HCT116 (cell line): ENCODE measurements at regions of chr3 and their contacts with region 1.

Region 1: GRCh38 chr3:192881159-192881786 is 36.4 kb downstream of the MB21D2 start:
- DNase-seq: no peak
- ATAC-seq: no peak
- H3K4me3 ChIP-seq: no peak overlapping the region
- H3K27ac ChIP-seq: no peak overlapping the region
- H3K4me1 ChIP-seq: peaks cover 36 to 52% of the 10 kb centered on the region in 2 experiments
- H3K27me3 ChIP-seq: no peaks in the 10 kb centered on the region
- CTCF ChIP-seq: no peak
- POLR2A ChIP-seq: no peak
- RAD21 ChIP-seq: no peak

Region 2: DNA sequence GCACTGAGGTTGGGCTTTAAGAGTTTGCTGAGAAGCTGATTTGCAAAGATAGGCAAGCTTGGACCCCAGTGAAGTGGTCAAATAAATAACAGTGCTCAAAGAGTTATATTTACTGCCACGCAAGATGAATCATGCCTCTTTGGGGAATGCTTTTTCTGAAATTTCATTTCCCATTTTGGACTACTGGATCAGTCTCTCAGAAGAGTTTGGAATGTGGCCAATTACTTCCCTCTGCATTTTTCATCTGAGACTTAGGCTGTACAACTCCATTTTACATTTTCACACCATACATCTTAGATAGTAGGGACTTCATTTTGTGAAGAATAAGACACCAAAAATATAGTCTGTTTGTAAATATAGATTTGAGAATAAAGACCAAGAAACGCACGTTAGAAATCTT is 573.6 kb before region 1 on chr3:
- CTCF ChIA-PET with region 1: no interaction called
- POLR2A ChIA-PET with region 1: no interaction called
- RAD21 ChIA-PET with region 1: no interaction called
- intact Hi-C with region 1: no loop called
- DNase-seq: no peak
- ATAC-seq: no peak
- H3K4me3 ChIP-seq: no peak overlapping the region
- H3K27ac ChIP-seq: no peak overlapping the region
- H3K4me1 ChIP-seq: no peaks in the 10 kb centered on the region
- H3K27me3 ChIP-seq: peaks cover 24% of the 10 kb centered on the region
- CTCF ChIP-seq: no peak
- POLR2A ChIP-seq: no peak
- RAD21 ChIP-seq: no peak

Region 3: GRCh38 chr3:192802957-192803899 is 78.0 kb before region 1 on chr3:
- CTCF ChIA-PET with region 1: no interaction called
- POLR2A ChIA-PET with region 1: no interaction called
- RAD21 ChIA-PET with region 1: no interaction called
- intact Hi-C with region 1: no loop called
- DNase-seq: peak; percentile 38
- ATAC-seq: peak; percentile 82
- H3K4me3 ChIP-seq: no peak overlapping the region
- H3K27ac ChIP-seq: no peak overlapping the region
- H3K4me1 ChIP-seq: no peaks in the 10 kb centered on the region
- H3K27me3 ChIP-seq: no peaks in the 10 kb centered on the region
- CTCF ChIP-seq: peak; percentile 52 to 68 (median 56)
- POLR2A ChIP-seq: no peak
- RAD21 ChIP-seq: peak; percentile 54

Region 4: DNA sequence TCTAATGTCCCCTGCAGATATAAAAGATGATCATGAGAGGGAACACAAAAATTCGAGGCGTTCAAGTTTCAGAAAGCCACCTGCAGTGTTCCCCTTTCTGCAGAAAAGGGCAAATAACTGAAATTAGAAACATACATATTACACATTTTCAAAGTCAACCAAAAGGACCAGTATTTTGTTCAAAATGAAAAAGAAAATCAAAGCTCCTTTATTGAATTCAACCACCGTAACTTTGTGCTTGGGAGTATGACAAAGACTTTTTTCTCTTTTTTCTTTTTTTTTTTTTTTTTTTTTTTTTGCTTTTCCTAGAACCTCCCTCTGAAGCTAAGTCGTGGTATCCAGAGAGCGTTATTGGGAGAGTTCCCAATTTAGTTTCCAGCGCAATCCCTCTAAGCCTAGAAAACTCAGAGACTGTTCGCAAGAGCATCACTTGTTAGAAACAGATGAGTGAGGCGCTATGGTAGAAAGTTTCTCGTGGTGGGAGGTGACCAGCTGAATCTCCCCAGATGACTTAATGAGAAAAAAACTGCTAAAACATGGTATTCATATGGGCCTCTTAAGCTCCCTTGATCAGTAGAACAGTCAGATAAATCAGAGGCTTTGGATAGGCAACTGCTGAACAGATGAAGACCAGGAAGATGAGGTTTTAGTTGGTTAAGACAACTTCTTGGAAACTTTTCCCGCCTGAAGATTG is 41.0 kb before region 1 on chr3:
- CTCF ChIA-PET with region 1: no interaction called
- POLR2A ChIA-PET with region 1: no interaction called
- RAD21 ChIA-PET with region 1: interaction called in 1 of 2 experiments, 10 read pairs
- intact Hi-C with region 1: no loop called
- DNase-seq: no peak
- ATAC-seq: no peak
- H3K4me3 ChIP-seq: no peak overlapping the region
- H3K27ac ChIP-seq: no peak overlapping the region
- H3K4me1 ChIP-seq: no peaks in the 10 kb centered on the region
- H3K27me3 ChIP-seq: no peaks in the 10 kb centered on the region
- CTCF ChIP-seq: no peak
- POLR2A ChIP-seq: no peak
- RAD21 ChIP-seq: no peak